Sigmoid colon (tissue), 7 donors: ENCODE measurements at regions of chr10 and their contacts with region 1.

Region 1: GRCh38 chr10:110547139-110547761 is 20.2 kb upstream of the SMC3 start:
- DNase-seq: no peak
- H3K4me3 ChIP-seq: no peak overlapping the region
- H3K27ac ChIP-seq: no peak overlapping the region
- H3K4me1 ChIP-seq: peaks cover 0 to 4% (median 0%) of the 10 kb centered on the region in 4 donors
- H3K27me3 ChIP-seq: no peaks in the 10 kb centered on the region
- CTCF ChIP-seq: peak; percentile 63 to 77 (median 70)
- EP300 ChIP-seq: no peak
- POLR2A ChIP-seq: no peak

Region 2: DNA sequence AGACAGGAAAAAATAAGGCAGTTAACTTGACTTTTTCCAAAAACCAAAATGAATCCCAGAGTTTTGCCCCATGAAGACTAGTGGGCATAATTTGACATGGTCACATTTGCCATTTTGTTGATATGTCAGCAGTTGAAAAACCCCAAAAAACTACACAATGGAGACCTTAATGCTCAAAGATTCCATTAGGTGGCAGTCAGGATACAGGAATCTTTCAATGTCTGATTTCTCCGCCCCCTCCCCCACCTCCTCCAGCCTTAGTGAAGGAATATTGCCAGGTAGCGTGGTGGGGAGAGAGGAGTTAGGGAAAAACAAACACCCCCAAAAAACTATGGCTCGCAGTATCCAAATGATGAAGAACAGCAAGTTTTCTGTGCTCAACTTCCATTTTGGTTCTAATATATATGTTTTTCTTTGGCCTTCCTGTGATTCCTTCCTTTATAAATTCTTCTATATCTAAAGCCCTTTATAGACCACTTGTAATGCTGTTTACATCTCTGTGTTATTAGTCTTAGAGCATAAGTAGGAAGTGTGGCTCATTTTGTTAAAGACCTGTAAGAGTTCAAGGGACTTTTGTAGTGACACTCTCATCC is 235.8 kb before region 1 on chr10:
- intact Hi-C with region 1: loop called (anchors 1 kb)
- DNase-seq: no peak
- H3K4me3 ChIP-seq: no peak overlapping the region
- H3K27ac ChIP-seq: no peak overlapping the region
- H3K4me1 ChIP-seq: peaks cover 0 to 14% (median 6%) of the 10 kb centered on the region in 4 donors
- H3K27me3 ChIP-seq: no peaks in the 10 kb centered on the region
- CTCF ChIP-seq: peak; percentile 58 to 75 (median 67)
- EP300 ChIP-seq: no peak
- POLR2A ChIP-seq: no peak

Region 3: DNA sequence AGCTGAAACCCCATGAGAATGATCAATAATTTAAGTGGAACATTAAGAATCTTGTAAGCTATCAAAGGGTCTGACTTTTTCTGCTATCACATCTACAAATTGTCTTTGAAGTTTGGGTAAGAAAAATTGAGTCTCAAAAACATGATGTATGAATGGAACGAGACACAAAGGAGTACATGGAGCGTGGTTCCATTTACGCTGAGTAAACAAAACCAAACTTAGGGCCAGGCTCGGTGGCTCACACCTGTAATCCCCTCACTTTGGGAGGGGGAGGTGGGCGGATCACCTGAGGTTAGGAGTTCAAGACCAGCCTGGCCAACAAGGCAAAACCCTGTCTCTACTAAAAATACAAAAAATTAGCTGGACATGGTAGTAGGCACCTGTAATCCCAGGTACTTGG is 44.5 kb after region 1 on chr10:
- intact Hi-C with region 1: no loop called
- DNase-seq: no peak
- H3K4me3 ChIP-seq: no peak overlapping the region
- H3K27ac ChIP-seq: no peak overlapping the region
- H3K4me1 ChIP-seq: no peaks in the 10 kb centered on the region
- H3K27me3 ChIP-seq: no peaks in the 10 kb centered on the region
- CTCF ChIP-seq: no peak
- EP300 ChIP-seq: no peak
- POLR2A ChIP-seq: no peak